SK-N-SH (cell line): ENCODE measurements at regions of chr17 and their contacts with region 1.

Region 1: GRCh38 chr17:56715613-56716357 is 117.9 kb downstream of the C17orf67 start:
- DNase-seq: peak; percentile 80
- H3K4me3 ChIP-seq: no peak overlapping the region
- H3K27ac ChIP-seq: no peak overlapping the region
- H3K4me1 ChIP-seq: no peaks in the 10 kb centered on the region
- H3K27me3 ChIP-seq: no peaks in the 10 kb centered on the region; the same call in 1 of the 2 replicates
- CTCF ChIP-seq: peak; percentile 97
- EP300 ChIP-seq: no peak
- RAD21 ChIP-seq: peak; percentile 94

Region 2: GRCh38 chr17:56570199-56570598 is 145.6 kb before region 1 on chr17:
- CTCF ChIA-PET with region 1: interaction called, 19 read pairs
- POLR2A ChIA-PET with region 1: no interaction called
- DNase-seq: no peak
- H3K4me3 ChIP-seq: no peak overlapping the region
- H3K27ac ChIP-seq: no peak overlapping the region
- H3K4me1 ChIP-seq: no peaks in the 10 kb centered on the region
- H3K27me3 ChIP-seq: 0 out of 2 replicates have a peak, but pooled peaks cover 5% of the 10 kb centered on the region
- CTCF ChIP-seq: no peak
- EP300 ChIP-seq: no peak
- RAD21 ChIP-seq: no peak

Region 3: DNA sequence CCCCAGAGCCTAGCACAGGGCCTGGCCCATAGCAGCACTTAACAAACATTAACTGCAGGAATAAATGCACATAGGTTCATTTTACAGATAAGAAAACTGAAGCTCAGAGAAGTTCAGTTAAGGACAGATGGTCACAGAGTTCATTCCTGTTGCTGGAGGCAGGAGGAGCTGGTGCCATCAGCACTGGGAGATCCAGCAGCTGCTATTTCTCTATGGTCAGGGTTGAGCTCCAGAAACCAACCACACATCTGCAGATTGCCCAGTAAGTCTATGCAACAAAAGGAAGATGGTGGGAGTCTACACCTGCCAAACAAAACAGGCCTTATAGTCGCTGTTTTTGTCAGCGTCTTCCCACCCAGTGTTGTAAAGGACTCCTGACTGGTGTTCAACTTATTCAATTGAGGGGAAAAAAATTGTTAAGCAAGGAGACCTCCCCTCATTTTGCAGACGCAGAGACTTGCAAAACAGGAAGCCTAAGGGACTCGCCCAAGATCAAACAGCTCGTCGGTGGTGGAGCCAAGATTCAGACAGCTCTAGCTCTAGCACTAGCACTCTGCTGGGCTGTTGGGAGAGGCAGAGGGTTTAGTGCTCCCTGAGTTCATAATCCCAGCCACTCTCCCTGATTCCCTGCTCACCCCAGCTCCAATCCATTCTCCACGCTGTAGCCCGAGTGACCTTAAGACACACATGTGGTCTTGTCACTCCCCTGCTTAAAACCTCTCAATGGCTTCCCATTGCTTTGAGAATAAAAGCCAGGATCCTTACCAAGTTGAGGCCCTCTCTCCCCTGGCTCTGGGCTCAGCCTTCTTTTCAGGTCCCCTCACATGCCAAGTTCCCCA is 113.3 kb before region 1 on chr17:
- CTCF ChIA-PET with region 1: interaction called, 253 read pairs
- POLR2A ChIA-PET with region 1: no interaction called
- DNase-seq: no peak
- H3K4me3 ChIP-seq: no peak overlapping the region
- H3K27ac ChIP-seq: no peak overlapping the region
- H3K4me1 ChIP-seq: no peaks in the 10 kb centered on the region; a peak in 2 of 4 replicates
- H3K27me3 ChIP-seq: no peaks in the 10 kb centered on the region
- CTCF ChIP-seq: no peak
- EP300 ChIP-seq: no peak
- RAD21 ChIP-seq: no peak

Region 4: DNA sequence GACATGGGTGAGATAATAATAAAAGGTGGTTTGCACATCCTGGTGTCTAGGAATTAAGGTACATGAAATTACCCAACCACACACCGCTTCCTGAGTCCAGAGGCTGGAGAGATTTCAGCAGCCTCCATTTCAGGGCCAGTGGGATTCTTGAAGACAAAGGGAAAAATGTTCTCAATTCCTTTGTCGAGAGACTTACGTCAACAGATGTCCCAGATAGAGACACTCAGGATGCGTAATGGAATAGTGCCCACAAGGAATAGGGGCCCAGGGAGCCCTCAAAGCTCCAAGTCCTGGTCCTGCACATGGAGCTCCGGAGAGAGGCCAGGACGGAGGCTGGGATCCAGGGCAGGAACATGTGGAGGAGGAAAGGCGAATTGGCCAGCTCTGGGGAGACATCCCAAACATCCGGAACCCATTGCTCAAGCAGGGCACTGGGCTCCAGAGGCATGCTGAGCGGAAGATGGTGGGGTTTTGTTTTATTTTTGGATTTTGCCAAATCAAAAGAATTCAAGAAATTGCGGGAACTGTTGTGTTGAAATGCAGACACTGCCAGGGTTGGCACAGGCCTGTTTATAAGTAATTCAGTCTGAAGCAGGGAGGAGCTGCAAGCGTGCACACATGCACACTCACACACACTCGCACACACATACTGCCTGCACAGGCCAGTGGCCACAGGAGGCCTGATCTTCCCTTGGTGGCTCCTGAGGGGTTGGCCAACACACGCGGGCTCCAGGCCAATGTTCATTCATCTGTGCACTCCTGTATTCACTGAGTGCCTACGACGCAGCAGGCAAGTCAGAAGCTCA is 25.1 kb before region 1 on chr17:
- CTCF ChIA-PET with region 1: interaction called, 29 read pairs
- POLR2A ChIA-PET with region 1: no interaction called
- DNase-seq: no peak
- H3K4me3 ChIP-seq: no peak overlapping the region
- H3K27ac ChIP-seq: no peak overlapping the region
- H3K4me1 ChIP-seq: no peaks in the 10 kb centered on the region
- H3K27me3 ChIP-seq: no peaks in the 10 kb centered on the region
- CTCF ChIP-seq: no peak
- EP300 ChIP-seq: no peak
- RAD21 ChIP-seq: no peak

Region 5: GRCh38 chr17:56737366-56738161 is 21.8 kb after region 1 on chr17:
- CTCF ChIA-PET with region 1: interaction called, 31 read pairs
- POLR2A ChIA-PET with region 1: no interaction called
- DNase-seq: no peak
- H3K4me3 ChIP-seq: no peak overlapping the region
- H3K27ac ChIP-seq: no peak overlapping the region
- H3K4me1 ChIP-seq: no peaks in the 10 kb centered on the region
- H3K27me3 ChIP-seq: no peaks in the 10 kb centered on the region; the same call in 1 of the 2 replicates
- CTCF ChIP-seq: no peak
- EP300 ChIP-seq: no peak
- RAD21 ChIP-seq: no peak

Region 6: DNA sequence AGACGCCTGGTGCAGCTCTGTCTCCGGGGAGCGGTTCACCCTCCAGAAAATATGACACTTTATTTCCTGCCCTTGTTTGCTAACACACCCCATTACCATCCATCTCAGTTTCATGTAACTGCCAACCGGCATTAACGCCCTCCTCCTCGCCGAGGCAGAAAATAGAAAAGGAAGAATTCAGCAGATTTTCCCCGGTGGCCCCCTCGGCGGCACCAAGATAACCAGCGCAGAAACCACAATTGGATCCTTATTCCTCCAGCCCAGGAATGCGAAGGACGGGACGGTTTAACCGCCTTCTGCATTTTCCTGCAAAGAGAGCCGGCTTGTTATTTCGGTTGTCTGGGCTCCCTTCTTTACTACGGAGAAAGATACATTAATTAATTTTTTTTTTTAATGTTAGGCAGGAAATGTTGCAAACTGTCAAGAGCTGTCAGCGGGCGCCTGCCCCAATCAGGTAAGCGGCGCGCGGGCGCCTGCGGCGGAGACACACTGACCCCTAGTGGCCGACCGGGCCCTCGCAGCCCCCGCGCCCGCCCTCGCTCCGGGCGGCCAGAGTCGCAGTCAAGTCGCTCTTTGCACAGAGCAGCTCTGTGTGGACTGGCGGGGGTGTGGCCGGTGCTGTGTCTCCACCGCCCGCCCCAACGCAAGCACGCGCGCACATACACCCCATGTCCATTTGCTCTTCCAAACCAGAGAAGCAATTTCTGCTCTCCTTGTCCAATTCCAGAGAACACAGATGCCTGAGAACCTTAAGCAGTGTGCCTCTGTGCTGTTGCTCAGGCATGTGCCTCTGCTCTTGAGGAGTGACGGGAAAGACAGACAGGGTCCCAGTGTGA is 64.3 kb after region 1 on chr17:
- CTCF ChIA-PET with region 1: interaction called, 37 read pairs
- POLR2A ChIA-PET with region 1: no interaction called
- DNase-seq: peak; percentile 93
- H3K4me3 ChIP-seq: peak overlapping the region; percentile 45 to 61
- H3K27ac ChIP-seq: no peak overlapping the region
- H3K4me1 ChIP-seq: peaks cover 4 to 8% of the 10 kb centered on the region in 2 experiments; a peak in 2 of 4 replicates
- H3K27me3 ChIP-seq: no peaks in the 10 kb centered on the region
- CTCF ChIP-seq: peak; percentile 100
- EP300 ChIP-seq: 0 out of 4 replicates have a peak, but pooled peaks of 1 of the 2 experiments have one; percentile 34
- RAD21 ChIP-seq: peak; percentile 85

Region 7: GRCh38 chr17:57557834-57558681 is 842.3 kb after region 1 on chr17:
- CTCF ChIA-PET with region 1: no interaction called
- POLR2A ChIA-PET with region 1: no interaction called
- DNase-seq: no peak
- H3K4me3 ChIP-seq: no peak overlapping the region
- H3K27ac ChIP-seq: peak overlapping the region in 1 of 2 experiments; percentile 99; a peak in 2 of 4 replicates
- H3K4me1 ChIP-seq: peaks cover 11 to 94% of the 10 kb centered on the region in 2 experiments; a peak in 3 of 4 replicates
- H3K27me3 ChIP-seq: no peaks in the 10 kb centered on the region
- CTCF ChIP-seq: no peak
- EP300 ChIP-seq: no peak
- RAD21 ChIP-seq: no peak